GM12878 (cell line): ENCODE measurements at regions of chr15 and their contacts with region 1.

Region 1: DNA sequence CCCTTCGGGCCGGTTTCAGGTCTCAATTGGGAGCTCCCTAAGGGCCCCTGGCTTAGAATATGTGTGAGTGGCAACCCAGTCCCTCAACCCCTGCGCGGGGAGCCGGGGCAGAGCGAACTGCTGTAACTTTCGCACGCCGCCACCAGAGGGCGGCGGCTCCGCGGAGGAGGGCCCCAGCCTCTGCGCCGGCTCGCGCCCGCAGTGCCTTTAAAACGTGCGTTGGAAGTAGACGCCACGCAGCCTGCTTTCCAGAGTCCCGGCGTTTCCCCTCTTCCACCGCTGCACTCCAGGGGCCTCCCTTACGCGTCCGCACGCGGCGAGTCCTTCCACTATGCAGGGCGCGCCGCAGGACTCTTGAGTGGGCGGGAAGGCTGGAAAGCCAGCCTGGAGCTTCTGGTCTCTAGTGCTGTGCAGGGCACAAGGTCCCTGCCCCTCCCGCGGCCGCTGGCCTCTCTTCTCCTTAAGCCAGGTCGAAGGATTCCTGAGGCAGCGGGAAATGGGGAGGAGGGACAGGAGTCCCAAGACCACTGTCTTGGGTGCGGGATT is 23.7 kb upstream of the RNU6-1 start:
- DNase-seq: peak; percentile 61
- ATAC-seq: peak; percentile 93
- H3K4me3 ChIP-seq: peak overlapping the region; percentile 64
- H3K27ac ChIP-seq: peak overlapping the region; percentile 86
- H3K4me1 ChIP-seq: peaks cover 34% of the 10 kb centered on the region
- H3K27me3 ChIP-seq: no peaks in the 10 kb centered on the region
- CTCF ChIP-seq: peak; percentile 89 to 95 (median 92); a peak in 5 of 6 replicates
- EP300 ChIP-seq: peak in 1 of 2 experiments; percentile 37; a peak in 1 of 4 replicates
- POLR2A ChIP-seq: no peak; the same call in 1 of the 2 replicates
- RAD21 ChIP-seq: peak; percentile 95

Region 2: GRCh38 chr15:67839929-67840748 is 23.4 kb before region 1 on chr15 and contains the start of gene RNU6-1:
- CTCF ChIA-PET with region 1: interaction called, 12 read pairs
- POLR2A ChIA-PET with region 1: interaction called, 7 read pairs
- RAD21 ChIA-PET with region 1: interaction called, 18 read pairs
- SMC1A ChIA-PET with region 1: interaction called, 10 read pairs
- in situ Hi-C with region 1: no loop called
- intact Hi-C with region 1: loop called (anchors 2 kb)
- DNase-seq: peak; percentile 88
- ATAC-seq: peak; percentile 86
- H3K4me3 ChIP-seq: peak within 1 kb of the TSS; percentile 85
- H3K27ac ChIP-seq: peak within 1 kb of the TSS; percentile 83
- H3K4me1 ChIP-seq: peaks cover 23% of the 10 kb centered on the region
- H3K27me3 ChIP-seq: peaks cover 8% of the 10 kb centered on the region in 2 experiments; a peak in 3 of 4 replicates
- CTCF ChIP-seq: no peak
- EP300 ChIP-seq: 0 out of 4 replicates have a peak, but pooled peaks have one; percentile 24
- POLR2A ChIP-seq: peak; percentile 94
- RAD21 ChIP-seq: 0 out of 2 replicates have a peak, but pooled peaks have one; percentile 3
- polyA plus RNA-seq, gene RNU6-1: not detected

Region 3: GRCh38 chr15:67937153-67937761 is 73.7 kb after region 1 on chr15:
- CTCF ChIA-PET with region 1: interaction called, 10 read pairs
- POLR2A ChIA-PET with region 1: interaction called, 7 read pairs
- RAD21 ChIA-PET with region 1: interaction called, 22 read pairs
- SMC1A ChIA-PET with region 1: interaction called, 22 read pairs
- in situ Hi-C with region 1: no loop called
- intact Hi-C with region 1: loop called (anchors 1 kb)
- DNase-seq: no peak
- ATAC-seq: peak; percentile 16
- H3K4me3 ChIP-seq: no peak overlapping the region
- H3K27ac ChIP-seq: peak overlapping the region; percentile 82
- H3K4me1 ChIP-seq: peaks cover 28% of the 10 kb centered on the region
- H3K27me3 ChIP-seq: no peaks in the 10 kb centered on the region
- CTCF ChIP-seq: no peak
- EP300 ChIP-seq: no peak
- POLR2A ChIP-seq: no peak
- RAD21 ChIP-seq: no peak

Region 4: DNA sequence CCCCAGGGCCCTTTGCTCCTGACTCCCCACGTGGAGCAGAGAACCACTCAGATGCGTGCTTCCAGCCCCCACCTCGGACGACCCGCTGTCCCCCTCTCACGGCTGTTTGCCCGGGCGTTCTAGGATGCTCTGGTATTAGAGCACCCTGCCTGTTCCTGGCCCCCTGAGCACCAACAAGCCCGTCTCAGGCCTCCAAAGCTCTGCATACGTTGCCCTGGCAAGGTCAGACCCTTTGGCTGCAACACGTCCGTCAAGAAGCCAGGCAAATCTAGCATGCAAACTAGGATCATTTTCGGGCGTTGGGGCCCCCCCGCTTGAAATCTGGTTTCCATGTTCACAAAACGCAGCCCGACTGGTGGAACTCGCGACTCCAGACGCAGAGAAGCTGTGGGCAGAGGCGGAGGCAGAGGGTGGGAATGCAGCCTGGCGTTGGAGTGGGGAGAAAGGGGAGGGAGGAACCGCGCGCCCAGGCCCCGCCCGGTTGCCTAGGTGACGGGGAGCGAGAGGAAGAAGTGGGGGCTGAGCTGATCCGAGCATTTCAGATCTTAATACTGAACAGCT is 104.4 kb after region 1 on chr15:
- CTCF ChIA-PET with region 1: interaction called, 6 read pairs
- POLR2A ChIA-PET with region 1: no interaction called
- RAD21 ChIA-PET with region 1: interaction called, 5 read pairs
- SMC1A ChIA-PET with region 1: interaction called, 5 read pairs
- in situ Hi-C with region 1: no loop called
- intact Hi-C with region 1: loop called (anchors 5 kb)
- DNase-seq: no peak
- ATAC-seq: peak; percentile 94
- H3K4me3 ChIP-seq: peak overlapping the region; percentile 58
- H3K27ac ChIP-seq: no peak overlapping the region
- H3K4me1 ChIP-seq: peaks cover 14% of the 10 kb centered on the region
- H3K27me3 ChIP-seq: no peaks in the 10 kb centered on the region
- CTCF ChIP-seq: no peak
- EP300 ChIP-seq: no peak
- POLR2A ChIP-seq: no peak
- RAD21 ChIP-seq: no peak

Region 5: DNA sequence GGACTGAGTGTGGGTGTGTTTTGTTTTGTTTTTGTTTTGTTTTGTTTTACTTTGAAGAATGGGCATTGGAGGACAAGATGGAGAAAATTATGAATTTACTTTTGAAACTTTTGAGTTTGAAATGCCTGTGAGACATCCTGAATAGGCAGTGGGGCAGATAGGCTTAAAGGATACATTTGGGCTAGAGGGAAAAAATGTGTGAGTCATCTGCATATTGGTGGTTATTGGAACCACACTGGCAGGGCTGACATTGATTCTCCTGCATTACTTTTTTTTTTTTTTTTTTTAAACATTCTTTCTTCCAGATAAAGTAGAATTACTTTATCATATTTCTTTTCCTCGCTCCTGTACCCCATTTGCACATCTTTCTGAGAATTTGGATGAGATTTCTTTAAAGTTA is 285.5 kb after region 1 on chr15:
- CTCF ChIA-PET with region 1: interaction called, 119 read pairs
- POLR2A ChIA-PET with region 1: interaction called, 3 read pairs
- RAD21 ChIA-PET with region 1: interaction called, 67 read pairs
- SMC1A ChIA-PET with region 1: interaction called, 97 read pairs
- in situ Hi-C with region 1: loop called (anchors 5 kb)
- intact Hi-C with region 1: loop called (anchors 2 kb)
- DNase-seq: no peak
- ATAC-seq: no peak
- H3K4me3 ChIP-seq: no peak overlapping the region
- H3K27ac ChIP-seq: no peak overlapping the region
- H3K4me1 ChIP-seq: no peaks in the 10 kb centered on the region
- H3K27me3 ChIP-seq: no peaks in the 10 kb centered on the region
- CTCF ChIP-seq: no peak
- EP300 ChIP-seq: no peak
- POLR2A ChIP-seq: no peak
- RAD21 ChIP-seq: no peak

Region 6: DNA sequence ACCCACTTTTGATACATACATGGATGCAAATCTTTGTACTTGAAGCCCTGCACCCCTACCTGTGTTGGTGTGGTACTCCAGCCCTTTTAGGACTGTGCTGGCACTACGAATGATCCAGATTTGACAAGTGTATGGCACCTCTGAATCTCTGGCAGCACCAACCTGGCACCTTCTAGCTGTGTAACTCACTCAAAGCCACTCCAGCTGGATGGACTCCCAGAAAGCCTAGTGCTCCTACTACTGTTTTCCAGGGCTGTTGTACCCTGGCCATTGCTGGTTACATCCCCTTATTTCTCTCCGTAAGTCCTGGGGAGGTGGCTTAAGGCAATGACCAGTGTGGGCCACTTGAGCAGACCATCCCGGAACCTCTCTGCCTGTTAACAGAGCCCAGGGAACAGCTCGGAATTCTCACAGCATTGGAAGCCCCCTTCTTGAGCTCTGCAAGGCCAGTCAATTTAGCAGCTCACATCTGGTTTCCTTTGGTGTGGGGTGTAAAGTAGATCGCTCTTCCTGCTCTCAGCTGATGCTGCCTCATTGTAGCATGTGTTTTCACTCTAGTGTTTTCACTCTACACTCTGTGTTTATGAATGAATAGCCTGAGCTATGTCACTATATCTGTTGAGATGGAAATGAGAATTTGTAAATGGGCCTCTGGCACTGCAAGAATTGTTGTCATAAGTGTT is 329.4 kb after region 1 on chr15:
- CTCF ChIA-PET with region 1: interaction called, 12 read pairs
- POLR2A ChIA-PET with region 1: no interaction called
- RAD21 ChIA-PET with region 1: interaction called, 7 read pairs
- SMC1A ChIA-PET with region 1: no interaction called
- in situ Hi-C with region 1: no loop called
- intact Hi-C with region 1: no loop called
- DNase-seq: no peak
- ATAC-seq: no peak
- H3K4me3 ChIP-seq: no peak overlapping the region
- H3K27ac ChIP-seq: no peak overlapping the region
- H3K4me1 ChIP-seq: peaks cover 17% of the 10 kb centered on the region
- H3K27me3 ChIP-seq: no peaks in the 10 kb centered on the region
- CTCF ChIP-seq: no peak
- EP300 ChIP-seq: no peak
- POLR2A ChIP-seq: peak; percentile 46
- RAD21 ChIP-seq: no peak